Sigmoid colon (tissue), 7 donors: ENCODE measurements at regions of chr19 and their contacts with region 1.

Region 1: DNA sequence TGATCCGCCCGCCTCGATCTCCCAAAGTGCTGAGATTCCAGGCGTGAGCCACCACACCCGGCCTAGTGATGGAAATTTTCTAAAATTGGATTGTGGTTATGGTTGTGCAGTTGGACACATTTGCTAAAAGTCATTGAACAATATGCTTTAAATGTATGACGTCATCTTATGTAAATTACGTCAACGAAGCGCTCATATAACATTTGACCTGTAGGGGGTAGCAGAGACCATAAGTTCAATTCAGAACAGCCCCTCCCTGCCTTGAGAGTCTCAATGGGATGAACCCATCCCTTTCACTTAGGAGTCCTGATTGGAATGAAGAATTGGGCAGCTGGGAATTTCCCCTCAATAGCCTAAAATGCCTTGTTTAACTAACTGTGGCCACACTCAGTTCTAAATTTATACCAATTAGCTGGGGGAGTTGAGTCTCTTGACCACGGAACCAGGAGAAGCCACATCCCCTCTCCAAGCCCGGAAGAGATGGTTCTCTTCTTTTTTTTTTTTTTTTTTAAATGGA is 15.3 kb upstream of the TLE6 start:
- DNase-seq: no peak
- H3K4me3 ChIP-seq: peak overlapping the region in 1 of 4 donors; percentile 7
- H3K27ac ChIP-seq: no peak overlapping the region
- H3K4me1 ChIP-seq: peaks cover 0 to 3% (median 0%) of the 10 kb centered on the region in 4 donors
- H3K27me3 ChIP-seq: no peaks in the 10 kb centered on the region
- CTCF ChIP-seq: peak; percentile 69 to 96 (median 84)
- EP300 ChIP-seq: no peak
- POLR2A ChIP-seq: no peak

Region 2: DNA sequence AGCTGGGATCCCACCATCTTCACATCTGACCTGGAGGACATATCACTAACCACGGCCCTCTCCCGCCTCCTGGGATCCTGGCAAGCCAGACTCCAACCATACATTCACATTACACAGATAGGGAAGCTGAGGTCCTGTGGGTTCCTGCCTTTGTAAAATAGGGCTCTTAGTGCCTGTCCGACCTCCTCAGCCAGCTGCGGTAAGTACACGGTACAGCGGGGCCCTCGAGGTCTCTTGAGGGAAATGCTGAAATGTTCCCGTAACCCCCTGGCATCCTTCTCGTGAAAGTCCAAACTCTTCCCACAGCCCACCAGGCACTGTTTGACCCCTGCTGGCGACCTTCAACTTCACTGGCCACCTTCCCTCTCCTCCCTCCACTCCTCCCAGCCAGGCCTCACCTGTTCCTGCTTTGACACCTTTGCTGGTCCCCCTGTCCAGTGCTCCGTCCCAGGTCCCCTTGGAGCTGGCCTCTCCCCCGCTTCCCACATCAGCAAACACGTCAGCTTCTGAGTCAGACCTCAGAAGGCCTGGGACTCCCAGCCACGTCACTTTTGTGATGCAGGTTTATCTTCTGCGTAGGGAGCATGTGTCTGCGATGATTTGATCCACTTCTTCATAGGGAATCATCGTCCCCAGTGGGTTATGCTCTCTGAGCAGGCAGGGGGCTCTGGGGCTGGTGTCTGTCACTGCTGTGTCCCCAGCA is 250.8 kb before region 1 on chr19:
- intact Hi-C with region 1: no loop called
- DNase-seq: peak; percentile 61
- H3K4me3 ChIP-seq: no peak overlapping the region
- H3K27ac ChIP-seq: no peak overlapping the region
- H3K4me1 ChIP-seq: no peaks in the 10 kb centered on the region
- H3K27me3 ChIP-seq: peaks cover 0 to 14% (median 3%) of the 10 kb centered on the region in 3 donors
- CTCF ChIP-seq: no peak
- EP300 ChIP-seq: no peak
- POLR2A ChIP-seq: no peak

Region 3: DNA sequence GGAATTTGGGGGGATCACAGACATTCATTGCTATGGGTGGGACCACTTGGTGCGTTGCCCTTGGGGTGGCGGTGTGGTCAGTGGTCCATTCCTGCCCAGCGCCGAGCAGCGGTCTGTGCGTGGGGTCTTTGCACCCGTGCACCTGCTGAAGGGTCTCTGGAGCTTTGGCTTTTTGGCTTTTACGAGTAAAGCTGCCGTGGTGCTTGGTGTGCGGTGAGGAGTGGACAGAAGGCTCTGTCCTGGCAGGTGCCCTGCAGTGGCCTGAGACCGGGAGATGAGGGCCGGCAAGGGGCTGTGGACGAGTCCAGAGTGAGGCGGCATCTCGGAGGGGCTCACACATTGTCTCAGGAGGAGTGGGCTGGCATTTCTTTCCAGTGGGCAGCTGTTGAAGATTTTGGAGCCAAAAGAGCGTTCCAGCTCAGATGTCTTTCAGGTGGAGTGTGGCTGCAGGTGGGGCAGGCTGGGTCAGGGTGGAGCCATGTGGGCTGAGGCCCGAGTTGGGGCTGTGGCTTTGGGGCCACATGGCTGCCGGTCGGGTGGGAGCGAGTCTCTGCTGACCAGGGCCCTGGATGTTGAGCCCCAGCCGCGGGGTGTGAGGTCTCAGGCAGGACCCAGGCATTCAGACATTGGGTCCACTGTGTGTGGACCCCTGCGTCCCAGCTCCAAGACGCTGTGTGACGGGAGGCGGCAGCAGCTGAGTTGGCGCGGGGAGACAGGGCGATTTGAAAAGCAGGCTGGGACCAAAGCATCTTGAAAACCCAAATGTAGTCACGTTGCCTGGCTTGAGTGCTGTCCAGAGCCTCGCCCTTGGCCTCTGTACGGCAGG is 143.8 kb after region 1 on chr19:
- intact Hi-C with region 1: loop called (anchors 2 kb)
- DNase-seq: no peak
- H3K4me3 ChIP-seq: no peak overlapping the region
- H3K27ac ChIP-seq: peak overlapping the region in 1 of 4 donors; percentile 18
- H3K4me1 ChIP-seq: peaks cover 0 to 50% (median 30%) of the 10 kb centered on the region in 4 donors
- H3K27me3 ChIP-seq: no peaks in the 10 kb centered on the region
- CTCF ChIP-seq: no peak
- EP300 ChIP-seq: no peak
- POLR2A ChIP-seq: no peak

Region 4: GRCh38 chr19:3163230-3163886 is 201.3 kb after region 1 on chr19:
- intact Hi-C with region 1: loop called (anchors 2 kb)
- DNase-seq: peak; percentile 82
- H3K4me3 ChIP-seq: no peak overlapping the region
- H3K27ac ChIP-seq: no peak overlapping the region
- H3K4me1 ChIP-seq: peaks cover 0 to 5% (median 2%) of the 10 kb centered on the region in 4 donors
- H3K27me3 ChIP-seq: no peaks in the 10 kb centered on the region
- CTCF ChIP-seq: peak; percentile 76 to 95 (median 88)
- EP300 ChIP-seq: no peak
- POLR2A ChIP-seq: no peak